ENCODE measurements at regions of chr12 and their contacts with region 1.

Region 1: DNA sequence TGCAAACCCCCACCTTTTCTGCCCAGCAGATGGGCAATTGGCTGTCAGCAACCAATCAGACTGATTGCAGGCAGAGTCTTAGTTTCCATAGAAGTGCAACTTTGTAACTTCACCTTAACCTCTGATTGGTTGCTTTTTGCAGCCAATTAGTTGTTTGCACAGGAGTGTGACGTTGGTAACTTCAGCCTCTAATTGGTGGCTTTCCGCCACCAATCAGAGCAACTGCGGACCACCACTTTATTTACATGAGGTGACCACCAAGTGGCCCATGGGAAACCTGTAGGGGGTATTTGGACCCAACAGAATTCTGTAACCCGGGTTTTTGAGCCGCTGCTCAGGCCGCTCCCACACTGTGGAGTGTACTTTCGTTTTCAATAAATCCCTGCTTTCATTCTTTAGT is 32.3 kb downstream of the CDKN1B start:
- DNase-seq: no peak
- ATAC-seq: no peak
- H3K4me3 ChIP-seq: no peak overlapping the region
- H3K4me3 Mint-ChIP-seq: no peak overlapping the region
- H3K27ac ChIP-seq: no peak overlapping the region
- H3K27ac Mint-ChIP-seq: no peak overlapping the region
- H3K4me1 ChIP-seq: no peaks in the 10 kb centered on the region
- H3K4me1 Mint-ChIP-seq: peaks cover 3% of the 10 kb centered on the region
- H3K27me3 ChIP-seq: no peaks in the 10 kb centered on the region
- H3K27me3 Mint-ChIP-seq: no peaks in the 10 kb centered on the region
- CTCF ChIP-seq: no peak

Region 2: GRCh38 chr12:12776261-12776660 is 26.8 kb after region 1 on chr12:
- CTCF ChIA-PET with region 1: no interaction called
- POLR2A ChIA-PET with region 1: no interaction called
- intact Hi-C with region 1: loop called (anchors 1 kb)
- DNase-seq: no peak
- ATAC-seq: no peak
- H3K4me3 ChIP-seq: no peak overlapping the region
- H3K4me3 Mint-ChIP-seq: no peak overlapping the region
- H3K27ac ChIP-seq: no peak overlapping the region
- H3K27ac Mint-ChIP-seq: no peak overlapping the region
- H3K4me1 ChIP-seq: no peaks in the 10 kb centered on the region
- H3K4me1 Mint-ChIP-seq: no peaks in the 10 kb centered on the region
- H3K27me3 ChIP-seq: no peaks in the 10 kb centered on the region
- H3K27me3 Mint-ChIP-seq: no peaks in the 10 kb centered on the region
- CTCF ChIP-seq: no peak

Measured in B cell (primary cell).